Endothelial cell of umbilical vein (primary cell): ENCODE measurements at regions of chr9 and their contacts with region 1.

Region 1: DNA sequence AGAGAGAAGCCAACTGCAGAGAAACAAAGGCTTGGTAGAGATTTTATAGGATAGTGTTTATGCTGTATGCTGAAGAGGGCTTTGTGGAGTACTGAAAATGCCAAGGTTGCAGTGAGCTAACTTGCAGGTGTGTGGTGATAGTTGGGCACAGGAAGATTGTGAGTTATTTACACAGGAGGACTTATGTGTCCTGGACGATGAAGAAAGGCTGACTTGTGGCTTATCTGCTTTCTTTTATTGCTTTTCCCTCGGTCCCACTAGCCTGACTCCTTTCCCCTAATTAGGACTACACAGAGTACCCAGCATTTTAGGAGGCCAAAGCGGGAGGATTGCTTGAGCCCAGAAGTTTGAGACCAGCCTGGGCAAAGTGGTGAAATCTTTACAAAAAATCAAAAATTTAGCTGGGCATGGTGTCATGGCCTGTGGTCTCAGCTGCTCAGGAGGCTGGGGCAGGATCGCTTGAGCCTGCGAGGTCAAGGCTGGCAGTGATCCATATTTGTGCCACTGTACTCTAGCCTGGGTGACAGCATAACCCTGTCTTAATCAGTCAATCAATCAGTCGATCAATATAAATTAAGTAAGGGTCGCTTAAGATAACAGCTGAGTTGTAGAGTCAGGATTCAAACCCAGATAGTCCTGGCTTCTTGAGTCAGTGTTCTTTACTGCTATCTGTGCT is 61.9 kb downstream of the UBE2R2 start:
- DNase-seq: no peak
- H3K4me3 ChIP-seq: no peak overlapping the region
- H3K27ac ChIP-seq: no peak overlapping the region
- H3K4me1 ChIP-seq: no peaks in the 10 kb centered on the region
- H3K27me3 ChIP-seq: no peaks in the 10 kb centered on the region
- CTCF ChIP-seq: no peak
- POLR2A ChIP-seq: no peak

Region 2: GRCh38 chr9:34334337-34334824 is 455.6 kb after region 1 on chr9:
- CTCF ChIA-PET with region 1: no interaction called
- POLR2A ChIA-PET with region 1: interaction called, 10 read pairs
- dilution Hi-C with region 1: no loop called
- intact Hi-C with region 1: no loop called
- DNase-seq: no peak
- H3K4me3 ChIP-seq: no peak overlapping the region
- H3K27ac ChIP-seq: no peak overlapping the region
- H3K4me1 ChIP-seq: no peaks in the 10 kb centered on the region
- H3K27me3 ChIP-seq: no peaks in the 10 kb centered on the region
- CTCF ChIP-seq: no peak
- POLR2A ChIP-seq: no peak